Activated CD8-positive, alpha-beta T cell treated with anti-CD3 and anti-CD28 coated beads for 36 hours (primary cell): ENCODE measurements at regions of chr11 and their contacts with region 1.

Region 1: DNA sequence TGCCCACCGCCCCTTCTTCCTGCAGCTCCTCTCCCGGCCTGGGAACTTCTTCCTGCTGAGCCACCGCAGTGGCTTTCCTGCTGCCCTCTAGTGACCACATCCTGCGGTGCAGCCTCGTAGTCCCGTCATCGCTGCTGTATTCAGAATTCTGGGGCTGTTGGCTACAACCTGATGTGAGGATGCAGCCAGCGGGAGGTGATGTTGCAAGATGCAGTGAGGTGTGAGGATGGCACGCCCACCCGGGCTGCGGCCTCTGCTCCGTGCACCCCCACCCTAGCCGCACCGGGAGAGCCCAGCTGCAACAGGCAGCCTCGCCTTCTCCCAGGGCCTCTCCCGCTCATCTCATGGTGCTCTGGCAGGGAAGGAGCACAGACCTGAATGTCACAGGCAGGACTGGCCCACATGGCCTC is 10.1 kb downstream of the CHST1 start:
- DNase-seq: peak; percentile 74
- ATAC-seq: peak; percentile 79
- H3K4me3 Mint-ChIP-seq: no peak overlapping the region
- H3K27ac Mint-ChIP-seq: no peak overlapping the region
- H3K4me1 Mint-ChIP-seq: peaks cover 3% of the 10 kb centered on the region
- H3K27me3 Mint-ChIP-seq: peaks cover 20% of the 10 kb centered on the region
- CTCF ChIP-seq: peak; percentile 93

Region 2: GRCh38 chr11:45102810-45103621 is 552.3 kb before region 1 on chr11:
- CTCF ChIA-PET with region 1: no interaction called
- POLR2A ChIA-PET with region 1: no interaction called
- intact Hi-C with region 1: no loop called
- DNase-seq: peak; percentile 91
- ATAC-seq: peak; percentile 98
- H3K4me3 Mint-ChIP-seq: peak overlapping the region; percentile 60
- H3K27ac Mint-ChIP-seq: peak overlapping the region; percentile 78
- H3K4me1 Mint-ChIP-seq: peaks cover 13% of the 10 kb centered on the region
- H3K27me3 Mint-ChIP-seq: peaks cover 10% of the 10 kb centered on the region
- CTCF ChIP-seq: peak; percentile 98

Region 3: GRCh38 chr11:45593992-45594391 is 61.4 kb before region 1 on chr11:
- CTCF ChIA-PET with region 1: no interaction called
- POLR2A ChIA-PET with region 1: no interaction called
- intact Hi-C with region 1: no loop called
- DNase-seq: no peak
- ATAC-seq: no peak
- H3K4me3 Mint-ChIP-seq: no peak overlapping the region
- H3K27ac Mint-ChIP-seq: no peak overlapping the region
- H3K4me1 Mint-ChIP-seq: no peaks in the 10 kb centered on the region
- H3K27me3 Mint-ChIP-seq: no peaks in the 10 kb centered on the region
- CTCF ChIP-seq: no peak

Region 4: DNA sequence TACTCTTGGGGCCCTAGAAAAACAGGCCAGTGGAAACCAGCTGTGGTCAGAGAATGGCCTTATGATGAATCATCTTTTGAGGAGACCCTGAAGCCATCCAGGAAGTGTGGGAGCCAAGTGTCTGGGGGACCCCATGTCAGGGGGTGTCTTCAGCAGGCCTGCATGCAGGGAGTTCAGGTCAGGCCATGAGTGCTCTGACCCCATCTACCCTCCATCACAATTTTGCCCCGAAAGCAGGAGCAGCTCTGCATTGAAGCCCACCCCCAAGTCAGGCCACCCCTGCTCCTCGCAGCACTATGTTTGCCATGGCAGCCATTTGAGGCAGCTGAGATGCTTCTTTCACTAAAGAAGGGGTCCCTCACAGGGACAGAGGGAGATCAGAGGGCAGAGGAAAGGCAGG is 31.3 kb before region 1 on chr11:
- CTCF ChIA-PET with region 1: interaction called, 11 read pairs
- POLR2A ChIA-PET with region 1: no interaction called
- intact Hi-C with region 1: no loop called
- DNase-seq: no peak
- ATAC-seq: no peak
- H3K4me3 Mint-ChIP-seq: no peak overlapping the region
- H3K27ac Mint-ChIP-seq: no peak overlapping the region
- H3K4me1 Mint-ChIP-seq: no peaks in the 10 kb centered on the region
- H3K27me3 Mint-ChIP-seq: peaks cover 39% of the 10 kb centered on the region
- CTCF ChIP-seq: no peak

Region 5: DNA sequence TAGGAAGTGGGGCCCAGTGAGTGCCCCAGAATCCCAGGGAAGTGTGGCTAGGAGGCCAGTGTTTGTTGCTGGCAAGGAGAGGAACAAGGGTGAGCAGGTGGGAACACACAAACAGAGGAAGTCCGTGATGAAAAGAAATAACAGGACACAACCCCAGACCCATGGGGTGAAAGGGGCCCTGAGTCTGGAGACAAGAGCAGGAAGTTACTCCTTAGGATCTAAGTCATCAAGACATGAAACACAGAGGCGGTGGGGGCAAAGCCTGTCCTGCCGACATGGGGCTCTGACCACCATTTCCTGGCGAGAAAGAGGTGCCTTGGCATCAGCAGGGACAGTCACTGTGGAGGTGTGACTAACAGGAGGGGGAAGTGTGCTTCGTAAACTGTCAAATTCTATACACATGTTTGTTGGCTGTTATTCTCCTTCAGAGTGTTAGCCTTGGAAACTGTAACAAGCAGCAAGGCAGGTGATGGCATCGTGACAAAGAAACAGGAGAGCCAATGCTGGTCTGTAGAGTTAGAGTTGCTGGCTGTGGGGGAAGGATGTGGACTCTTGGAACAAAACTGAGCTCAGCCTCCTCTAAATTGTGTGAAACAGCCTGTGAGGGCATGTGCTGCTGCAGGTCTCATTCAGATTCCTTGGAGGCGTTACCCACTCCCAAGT is 11.6 kb before region 1 on chr11:
- CTCF ChIA-PET with region 1: interaction called, 10 read pairs
- POLR2A ChIA-PET with region 1: interaction called, 3 read pairs
- intact Hi-C with region 1: no loop called
- DNase-seq: no peak
- ATAC-seq: peak; percentile 42
- H3K4me3 Mint-ChIP-seq: no peak overlapping the region
- H3K27ac Mint-ChIP-seq: no peak overlapping the region
- H3K4me1 Mint-ChIP-seq: peaks cover 3% of the 10 kb centered on the region
- H3K27me3 Mint-ChIP-seq: peaks cover 22% of the 10 kb centered on the region
- CTCF ChIP-seq: no peak